Prostate gland (tissue), 2 donors: ENCODE measurements at regions of chr6 and their contacts with region 1.

Region 1: GRCh38 chr6:126170978-126171382 is 168.9 kb upstream of the CENPW start:
- DNase-seq: no peak
- H3K4me3 ChIP-seq: no peak overlapping the region
- H3K27ac ChIP-seq: no peak overlapping the region
- H3K4me1 ChIP-seq: no peaks in the 10 kb centered on the region
- H3K27me3 ChIP-seq: no peaks in the 10 kb centered on the region
- CTCF ChIP-seq: peak in 2 of 4 experiments; percentile 18 to 24
- POLR2A ChIP-seq: no peak

Region 2: GRCh38 chr6:126339796-126340609 is 169.0 kb after region 1 on chr6 and contains the start of gene CENPW:
- intact Hi-C with region 1: loop called (anchors 10 kb)
- DNase-seq: peak; percentile 75
- H3K4me3 ChIP-seq: peak within 1 kb of the TSS; percentile 39 to 45
- H3K27ac ChIP-seq: peak within 1 kb of the TSS; percentile 22 to 34
- H3K4me1 ChIP-seq: peaks cover 8% of the 10 kb centered on the region
- H3K27me3 ChIP-seq: no peaks in the 10 kb centered on the region
- CTCF ChIP-seq: no peak
- POLR2A ChIP-seq: no peak
- total RNA-seq, gene CENPW: 2.1 TPM in 1 of 2 donors, not detected in the other

Region 3: DNA sequence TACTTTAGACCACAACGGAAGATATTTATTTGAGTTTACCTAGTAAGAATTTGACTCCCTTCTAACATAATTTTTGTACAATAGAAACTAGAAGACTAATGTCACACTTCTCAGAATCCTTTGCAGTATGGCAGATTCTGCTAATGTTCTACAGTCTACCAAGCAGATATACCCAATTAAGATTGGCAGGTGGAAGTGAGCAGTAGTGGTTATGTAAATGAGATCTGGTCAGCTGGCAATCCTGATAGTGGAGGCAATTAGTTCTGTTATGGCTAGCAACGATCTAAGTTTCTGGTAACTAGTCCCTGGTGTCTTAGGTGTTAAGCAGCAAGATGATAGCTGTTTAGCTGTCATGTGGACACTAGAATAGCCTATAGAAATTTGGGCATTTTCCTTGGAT is 269.9 kb after region 1 on chr6:
- intact Hi-C with region 1: no loop called
- DNase-seq: no peak
- H3K4me3 ChIP-seq: no peak overlapping the region
- H3K27ac ChIP-seq: no peak overlapping the region
- H3K4me1 ChIP-seq: no peaks in the 10 kb centered on the region
- H3K27me3 ChIP-seq: no peaks in the 10 kb centered on the region
- CTCF ChIP-seq: no peak
- POLR2A ChIP-seq: no peak